Activated T-helper 1 cell treated with anti-CD3 and anti-CD28 coated beads, Interleukin-12 subunit alpha, Interleukin-12 subunit beta, Interleukin-2, Interleukin-4 antibody, amounts not matched to agents 30 ng/mL and 10 ng/mL and 1 ng/mL, durations not matched to agents 14 hours and 24 hours and 36 hours (primary cell): ENCODE measurements at regions of chr1 and their contacts with region 1.

Region 1: DNA sequence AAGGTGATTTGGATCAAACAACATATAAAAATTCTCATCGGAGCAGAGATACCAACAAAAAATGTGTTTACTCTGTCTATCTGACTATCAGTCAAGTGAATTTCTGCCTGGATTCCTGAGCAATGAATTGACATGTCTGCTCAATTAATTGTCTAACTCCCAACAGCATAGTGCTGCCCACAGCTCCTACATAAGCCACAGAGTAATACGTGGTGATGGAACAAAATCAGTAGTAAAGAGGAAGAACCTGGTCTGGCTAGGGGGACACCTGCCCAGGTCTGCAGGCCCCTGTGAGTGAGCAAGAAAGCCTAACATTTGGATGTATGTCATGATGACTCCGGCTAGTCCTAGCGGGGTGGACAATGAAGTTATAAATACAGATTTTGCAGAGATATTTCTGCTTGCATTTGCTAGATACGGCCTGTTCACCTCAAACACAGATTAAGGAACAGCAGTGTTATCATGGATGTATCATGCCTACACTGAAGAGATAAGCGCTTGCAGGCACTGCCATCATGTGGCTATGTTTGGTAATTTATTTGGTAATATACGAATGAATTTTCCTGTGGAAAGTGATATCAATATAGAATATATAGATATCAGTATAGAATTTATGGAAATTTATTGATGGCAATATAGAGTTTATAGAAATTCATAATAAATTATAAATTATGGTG is 69.6 kb upstream of the LRRC8B start:
- DNase-seq: peak; percentile 51
- H3K4me3 Mint-ChIP-seq: no peak overlapping the region
- H3K27ac Mint-ChIP-seq: no peak overlapping the region
- H3K4me1 Mint-ChIP-seq: peaks cover 21% of the 10 kb centered on the region
- H3K27me3 Mint-ChIP-seq: peaks cover 25% of the 10 kb centered on the region

Region 2: DNA sequence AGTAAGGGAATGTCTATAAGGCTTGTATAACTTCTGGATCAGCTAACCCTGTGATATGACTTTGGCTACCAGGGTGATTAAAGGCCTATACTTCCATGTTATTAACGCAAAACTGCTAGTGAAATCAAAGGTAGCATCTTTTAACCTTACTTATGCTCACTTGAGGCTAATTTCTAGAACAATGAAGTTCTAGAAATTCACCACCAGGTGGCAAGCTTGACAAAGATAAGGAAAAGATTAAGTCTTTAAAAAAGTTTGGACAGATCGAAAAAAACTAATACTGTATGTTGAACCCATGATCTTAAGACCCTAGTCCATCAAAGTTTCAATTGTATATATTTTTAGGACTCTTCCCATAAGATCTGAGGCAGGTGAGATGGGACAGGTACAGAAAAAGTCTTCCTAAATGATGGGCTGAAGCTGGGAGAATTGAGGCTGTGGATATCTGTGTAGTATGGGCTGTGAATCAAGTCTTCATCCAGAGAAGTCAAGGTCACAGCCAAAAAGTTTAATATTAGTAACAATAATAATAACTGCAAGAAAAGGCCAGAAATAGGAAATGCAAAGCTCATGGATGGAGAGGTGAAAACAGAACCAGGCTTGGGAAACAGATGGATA is 481.4 kb before region 1 on chr1:
- intact Hi-C with region 1: loop called (anchors 1 kb)
- DNase-seq: no peak
- H3K4me3 Mint-ChIP-seq: no peak overlapping the region
- H3K27ac Mint-ChIP-seq: peak overlapping the region; percentile 14
- H3K4me1 Mint-ChIP-seq: peaks cover 20% of the 10 kb centered on the region
- H3K27me3 Mint-ChIP-seq: no peaks in the 10 kb centered on the region

Region 3: DNA sequence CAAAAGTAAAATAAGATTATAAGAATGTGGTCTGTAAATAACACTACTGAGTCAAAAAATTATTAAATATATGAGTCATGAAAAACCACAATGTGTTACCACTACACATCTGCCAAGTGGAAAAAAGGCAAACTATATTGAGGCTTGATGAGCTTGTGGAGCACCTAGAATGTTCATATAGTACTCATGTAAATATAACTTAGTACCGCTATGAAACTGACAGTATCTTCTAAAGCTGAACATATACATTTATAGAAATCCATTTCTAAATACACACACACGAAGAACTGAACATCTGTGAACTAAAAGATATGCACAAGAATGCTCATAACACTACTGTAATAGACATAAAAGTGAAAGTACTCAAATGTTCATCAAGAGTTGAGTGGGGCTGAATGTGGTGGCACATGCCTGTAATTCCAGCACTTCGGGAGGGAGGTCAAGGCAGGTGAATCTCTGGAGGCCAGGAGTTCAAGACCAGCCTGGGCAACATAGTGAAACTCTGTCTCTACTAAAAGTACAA is 413.8 kb before region 1 on chr1:
- intact Hi-C with region 1: loop called (anchors 1 kb)
- DNase-seq: no peak
- H3K4me3 Mint-ChIP-seq: peak overlapping the region; percentile 19
- H3K27ac Mint-ChIP-seq: peak overlapping the region; percentile 69
- H3K4me1 Mint-ChIP-seq: peaks cover 35% of the 10 kb centered on the region
- H3K27me3 Mint-ChIP-seq: peaks cover 1% of the 10 kb centered on the region

Region 4: GRCh38 chr1:89198491-89199072 is 256.4 kb before region 1 on chr1 and contains the start of gene GBP4:
- intact Hi-C with region 1: loop called (anchors 1 kb)
- DNase-seq: peak; percentile 43
- H3K4me3 Mint-ChIP-seq: peak within 1 kb of the TSS; percentile 93
- H3K27ac Mint-ChIP-seq: peak within 1 kb of the TSS; percentile 93
- H3K4me1 Mint-ChIP-seq: peaks cover 88% of the 10 kb centered on the region
- H3K27me3 Mint-ChIP-seq: no peaks in the 10 kb centered on the region
- total RNA-seq, gene GBP4: 36.8 and 37.5 TPM in 2 replicates

Region 5: GRCh38 chr1:89298461-89298860 is 156.5 kb before region 1 on chr1:
- intact Hi-C with region 1: loop called (anchors 2 kb)
- DNase-seq: no peak
- H3K4me3 Mint-ChIP-seq: peak overlapping the region; percentile 37
- H3K27ac Mint-ChIP-seq: peak overlapping the region; percentile 75
- H3K4me1 Mint-ChIP-seq: peaks cover 81% of the 10 kb centered on the region
- H3K27me3 Mint-ChIP-seq: no peaks in the 10 kb centered on the region

Region 6: GRCh38 chr1:89429062-89429461 is 25.9 kb before region 1 on chr1:
- intact Hi-C with region 1: loop called (anchors 1 kb)
- DNase-seq: no peak
- H3K4me3 Mint-ChIP-seq: no peak overlapping the region
- H3K27ac Mint-ChIP-seq: no peak overlapping the region
- H3K4me1 Mint-ChIP-seq: peaks cover 10% of the 10 kb centered on the region
- H3K27me3 Mint-ChIP-seq: peaks cover 12% of the 10 kb centered on the region